IMR-90 (cell line): ENCODE measurements at regions of chr11 and their contacts with region 1.

Region 1: GRCh38 chr11:32671051-32671450 is 87.4 kb downstream of the EIF3M start:
- DNase-seq: no peak
- ATAC-seq: no peak
- H3K4me3 ChIP-seq: no peak overlapping the region
- H3K27ac ChIP-seq: no peak overlapping the region
- H3K4me1 ChIP-seq: no peaks in the 10 kb centered on the region
- H3K27me3 ChIP-seq: no peaks in the 10 kb centered on the region
- CTCF ChIP-seq: no peak
- POLR2A ChIP-seq: no peak
- RAD21 ChIP-seq: no peak

Region 2: GRCh38 chr11:32290783-32291182 is 380.3 kb before region 1 on chr11:
- CTCF ChIA-PET with region 1: interaction called, 10 read pairs
- POLR2A ChIA-PET with region 1: no interaction called
- dilution Hi-C with region 1: no loop called
- in situ Hi-C with region 1: no loop called
- intact Hi-C with region 1: no loop called
- DNase-seq: no peak
- ATAC-seq: no peak
- H3K4me3 ChIP-seq: no peak overlapping the region
- H3K27ac ChIP-seq: no peak overlapping the region
- H3K4me1 ChIP-seq: no peaks in the 10 kb centered on the region
- H3K27me3 ChIP-seq: peaks cover 3% of the 10 kb centered on the region; the same call in 1 of the 2 replicates
- CTCF ChIP-seq: no peak
- POLR2A ChIP-seq: no peak
- RAD21 ChIP-seq: no peak

Region 3: GRCh38 chr11:32571039-32571438 is 100.0 kb before region 1 on chr11:
- CTCF ChIA-PET with region 1: no interaction called
- POLR2A ChIA-PET with region 1: no interaction called
- dilution Hi-C with region 1: no loop called
- in situ Hi-C with region 1: no loop called
- intact Hi-C with region 1: no loop called
- DNase-seq: no peak
- ATAC-seq: no peak; the same call in 1 of the 2 replicates
- H3K4me3 ChIP-seq: no peak overlapping the region
- H3K27ac ChIP-seq: no peak overlapping the region
- H3K4me1 ChIP-seq: no peaks in the 10 kb centered on the region
- H3K27me3 ChIP-seq: peaks cover 8% of the 10 kb centered on the region
- CTCF ChIP-seq: no peak
- POLR2A ChIP-seq: no peak
- RAD21 ChIP-seq: no peak

Region 4: DNA sequence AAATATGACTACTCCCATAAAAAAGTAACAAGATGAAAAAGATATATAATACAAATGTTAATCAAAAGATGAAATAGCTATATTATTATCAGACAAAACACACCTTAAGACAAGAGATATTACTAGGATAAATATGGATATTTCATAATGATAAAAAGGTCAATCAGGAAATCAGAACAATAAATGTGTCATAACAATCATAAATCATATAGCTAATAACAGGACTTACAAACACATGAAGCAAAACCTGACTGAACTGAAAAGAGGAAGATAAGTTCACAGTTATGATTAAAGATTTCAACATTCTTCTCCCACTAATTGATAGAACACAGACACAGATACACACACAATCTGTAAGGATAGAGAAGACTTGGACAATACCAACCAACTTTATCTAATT is 40.2 kb before region 1 on chr11:
- CTCF ChIA-PET with region 1: no interaction called
- POLR2A ChIA-PET with region 1: no interaction called
- dilution Hi-C with region 1: no loop called
- in situ Hi-C with region 1: no loop called
- intact Hi-C with region 1: no loop called
- DNase-seq: no peak
- ATAC-seq: no peak
- H3K4me3 ChIP-seq: no peak overlapping the region
- H3K27ac ChIP-seq: no peak overlapping the region
- H3K4me1 ChIP-seq: no peaks in the 10 kb centered on the region
- H3K27me3 ChIP-seq: no peaks in the 10 kb centered on the region
- CTCF ChIP-seq: no peak
- POLR2A ChIP-seq: no peak
- RAD21 ChIP-seq: no peak